ENCODE measurements at regions of chr1 and their contacts with region 1.

Region 1: GRCh38 chr1:21324368-21325141 is 34.3 kb upstream of the ECE1 start:
- DNase-seq: peak; percentile 96 to 97
- H3K4me3 ChIP-seq: peak overlapping the region; percentile 24; the same call in 1 of the 2 replicates
- H3K27ac ChIP-seq: peak overlapping the region; percentile 94
- H3K4me1 ChIP-seq: peaks cover 68% of the 10 kb centered on the region
- H3K27me3 ChIP-seq: no peaks in the 10 kb centered on the region
- CTCF ChIP-seq: no peak

Region 2: DNA sequence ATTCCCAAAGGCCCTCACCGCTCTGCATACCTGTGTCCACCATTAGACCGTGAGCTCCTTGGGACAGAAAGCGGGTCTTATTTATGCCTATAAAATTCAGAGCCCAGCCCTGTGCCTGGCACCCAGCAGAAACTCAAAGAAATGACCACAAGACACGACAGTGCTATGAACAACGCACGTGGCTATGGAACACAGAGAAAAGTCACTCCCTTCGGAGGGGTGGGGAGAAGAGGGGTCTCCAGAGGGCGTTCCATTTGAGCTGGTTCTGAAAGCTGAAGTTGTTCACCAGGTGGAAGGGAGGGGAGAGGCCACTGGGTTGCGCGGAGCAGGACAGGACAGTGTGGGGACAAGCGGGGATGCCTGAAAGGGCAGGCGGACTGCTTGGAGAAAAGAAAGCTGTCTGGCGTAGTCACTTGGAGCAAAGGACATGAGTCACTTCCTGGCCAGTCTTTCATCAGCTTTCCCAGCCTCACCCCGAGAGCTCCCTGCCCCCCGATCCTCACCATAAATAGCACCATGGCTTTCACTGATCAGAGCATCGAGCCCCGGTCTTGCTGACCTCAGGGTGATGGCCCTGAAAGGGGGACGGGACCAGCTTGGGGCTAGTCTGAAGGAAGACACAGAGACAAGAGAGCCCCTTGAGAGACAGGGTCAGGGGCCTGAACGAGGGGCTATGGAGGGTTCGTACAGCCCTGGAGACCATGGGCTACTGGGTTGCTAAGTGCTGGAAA is 62.8 kb before region 1 on chr1:
- CTCF ChIA-PET with region 1: no interaction called
- POLR2A ChIA-PET with region 1: interaction called, 3 read pairs
- intact Hi-C with region 1: loop called (anchors 2 kb)
- DNase-seq: peak; percentile 77 to 82
- H3K4me3 ChIP-seq: no peak overlapping the region
- H3K27ac ChIP-seq: peak overlapping the region; percentile 96
- H3K4me1 ChIP-seq: peaks cover 26% of the 10 kb centered on the region
- H3K27me3 ChIP-seq: no peaks in the 10 kb centered on the region
- CTCF ChIP-seq: no peak

Region 3: GRCh38 chr1:21294266-21294989 is 30.1 kb before region 1 on chr1:
- CTCF ChIA-PET with region 1: no interaction called
- POLR2A ChIA-PET with region 1: interaction called, 5 read pairs
- intact Hi-C with region 1: loop called (anchors 1 kb)
- DNase-seq: peak; percentile 71 to 85
- H3K4me3 ChIP-seq: peak overlapping the region; percentile 2; the same call in 1 of the 2 replicates
- H3K27ac ChIP-seq: peak overlapping the region; percentile 94
- H3K4me1 ChIP-seq: peaks cover 42% of the 10 kb centered on the region
- H3K27me3 ChIP-seq: no peaks in the 10 kb centered on the region
- CTCF ChIP-seq: no peak

Region 4: GRCh38 chr1:21302747-21303715 is 21.5 kb before region 1 on chr1:
- CTCF ChIA-PET with region 1: no interaction called
- POLR2A ChIA-PET with region 1: interaction called, 13 read pairs
- intact Hi-C with region 1: no loop called
- DNase-seq: peak in 1 of 2 experiments; percentile 33
- H3K4me3 ChIP-seq: no peak overlapping the region
- H3K27ac ChIP-seq: no peak overlapping the region
- H3K4me1 ChIP-seq: peaks cover 23% of the 10 kb centered on the region
- H3K27me3 ChIP-seq: no peaks in the 10 kb centered on the region
- CTCF ChIP-seq: no peak

Region 5: DNA sequence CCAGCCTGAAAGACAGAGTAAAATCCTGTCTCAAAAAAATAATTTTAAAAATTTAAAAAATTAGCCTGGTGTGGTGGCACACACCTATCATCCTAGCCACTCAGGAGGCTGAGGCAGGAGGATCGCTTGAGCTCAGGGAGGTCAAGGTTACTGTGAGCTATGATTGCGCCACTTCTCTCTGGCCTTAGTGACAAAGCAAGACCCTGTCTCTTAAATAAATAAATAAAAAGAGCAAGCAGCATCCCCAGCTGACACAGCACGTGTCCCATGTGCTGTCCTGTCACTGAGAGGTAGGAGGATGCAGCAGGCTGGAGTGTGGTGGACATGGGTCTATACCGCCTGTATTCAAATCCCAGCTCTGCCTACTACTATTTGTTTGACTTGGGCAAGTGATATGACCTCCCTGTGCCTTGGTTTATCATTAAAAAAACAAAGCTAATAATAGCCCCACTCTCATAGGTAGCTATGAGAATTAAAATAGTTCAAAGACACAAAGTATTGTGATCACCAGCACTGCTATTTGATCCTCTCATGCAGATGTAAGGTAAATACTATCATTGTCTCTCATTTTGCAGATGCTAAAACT is 12.1 kb before region 1 on chr1:
- CTCF ChIA-PET with region 1: no interaction called
- POLR2A ChIA-PET with region 1: interaction called, 27 read pairs
- intact Hi-C with region 1: no loop called
- DNase-seq: no peak
- H3K4me3 ChIP-seq: no peak overlapping the region
- H3K27ac ChIP-seq: no peak overlapping the region
- H3K4me1 ChIP-seq: no peaks in the 10 kb centered on the region
- H3K27me3 ChIP-seq: no peaks in the 10 kb centered on the region
- CTCF ChIP-seq: no peak

Region 6: DNA sequence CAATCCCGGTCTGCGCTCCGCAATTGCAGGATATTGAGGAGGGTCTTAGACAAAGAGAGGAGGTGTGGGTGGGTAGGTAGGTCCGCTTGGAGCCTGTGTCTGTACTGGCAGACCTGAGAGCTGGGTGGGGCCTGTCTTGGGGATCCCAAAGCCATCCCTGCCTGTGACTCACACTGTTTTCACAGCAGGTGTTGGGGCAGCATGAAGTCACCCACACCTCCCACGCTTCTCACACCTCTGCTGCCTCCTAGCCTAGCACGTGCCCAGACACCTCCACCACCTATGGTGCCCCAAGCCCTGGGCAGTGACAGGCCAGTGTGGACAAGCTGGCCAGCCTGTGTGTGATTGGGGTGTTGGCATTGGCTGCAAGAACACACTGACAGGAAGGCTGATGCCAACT is 31.4 kb after region 1 on chr1:
- CTCF ChIA-PET with region 1: no interaction called
- POLR2A ChIA-PET with region 1: no interaction called
- intact Hi-C with region 1: no loop called
- DNase-seq: peak; percentile 36 to 37
- H3K4me3 ChIP-seq: no peak overlapping the region
- H3K27ac ChIP-seq: no peak overlapping the region
- H3K4me1 ChIP-seq: no peaks in the 10 kb centered on the region
- H3K27me3 ChIP-seq: no peaks in the 10 kb centered on the region
- CTCF ChIP-seq: no peak

Region 7: GRCh38 chr1:21631944-21632887 is 307.7 kb after region 1 on chr1:
- CTCF ChIA-PET with region 1: no interaction called
- POLR2A ChIA-PET with region 1: interaction called, 26 read pairs
- intact Hi-C with region 1: no loop called
- DNase-seq: peak in 1 of 2 experiments; percentile 58
- H3K4me3 ChIP-seq: no peak overlapping the region
- H3K27ac ChIP-seq: peak overlapping the region; percentile 56
- H3K4me1 ChIP-seq: peaks cover 90% of the 10 kb centered on the region
- H3K27me3 ChIP-seq: no peaks in the 10 kb centered on the region
- CTCF ChIP-seq: no peak